Dendritic cell treated with granulocyte-macrophage colony-stimulating factor and Interleukin-4, amounts not matched to agents 40 ng/mL and 50 ng/mL, for 4 days (primary cell): ENCODE measurements at regions of chr10 and their contacts with region 1.

Region 1: DNA sequence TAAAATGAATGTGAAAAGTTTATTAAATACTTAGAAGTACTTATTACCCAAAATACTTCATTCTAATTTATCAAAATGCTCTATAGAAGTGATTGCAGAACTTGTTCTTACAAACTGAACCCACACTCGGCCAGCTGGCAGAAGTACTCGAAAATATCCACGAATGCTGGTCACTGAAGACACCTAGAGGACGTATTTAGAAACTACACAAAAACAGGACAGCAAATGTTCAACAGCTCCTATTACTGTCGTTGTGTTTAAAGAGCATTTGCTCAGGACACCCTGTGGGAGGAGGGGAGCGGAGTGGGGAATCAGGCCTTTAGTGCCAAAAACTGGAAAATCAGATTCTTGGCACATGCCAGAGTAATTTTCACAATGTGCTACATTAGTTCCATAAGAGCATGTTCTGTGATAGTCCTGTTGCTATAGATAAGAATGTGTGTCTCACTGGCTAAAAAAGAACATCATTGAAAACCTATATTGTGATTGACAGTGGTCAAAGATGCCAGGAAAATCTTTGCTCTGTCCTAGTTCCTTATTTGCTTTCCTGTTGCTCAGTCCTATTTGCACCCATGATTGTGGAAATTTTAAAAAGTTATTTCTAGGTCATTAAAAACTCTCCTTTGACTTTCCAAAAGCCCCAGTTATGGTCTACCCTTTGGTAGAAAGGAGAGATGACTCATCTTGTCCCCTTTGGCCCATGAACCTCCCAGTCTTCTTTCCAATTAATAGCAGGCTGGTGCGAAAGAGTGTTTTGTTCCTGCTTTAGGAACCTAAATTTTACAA is 49.0 kb upstream of the NRBF2 start:
- H3K4me3 Mint-ChIP-seq: no peak overlapping the region
- H3K27ac Mint-ChIP-seq: no peak overlapping the region
- H3K4me1 Mint-ChIP-seq: no peaks in the 10 kb centered on the region
- H3K27me3 Mint-ChIP-seq: peaks cover 22% of the 10 kb centered on the region

Region 2: DNA sequence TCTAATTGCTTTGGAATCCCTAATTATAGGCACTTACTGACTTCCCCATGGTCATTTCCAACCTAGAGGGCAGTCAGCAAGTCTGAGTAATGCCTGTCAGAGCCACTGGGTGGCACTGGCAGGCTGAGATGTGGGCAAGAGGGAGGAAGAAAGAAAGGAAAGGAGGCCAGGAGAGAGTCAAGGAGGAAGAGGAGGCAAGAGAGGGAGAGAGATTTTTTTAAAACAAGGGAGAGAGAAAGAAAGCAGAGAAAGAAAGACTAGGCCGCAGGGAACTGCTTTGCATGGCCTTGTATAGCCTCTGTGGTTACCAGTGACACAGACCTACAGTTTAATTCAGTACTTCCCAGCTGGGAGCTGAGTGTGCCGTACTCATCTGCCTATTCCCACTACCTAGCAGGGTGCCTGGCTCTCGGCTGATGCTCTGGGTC is 490.0 kb before region 1 on chr10:
- intact Hi-C with region 1: loop called (anchors 1 kb)
- H3K4me3 Mint-ChIP-seq: no peak overlapping the region
- H3K27ac Mint-ChIP-seq: peak overlapping the region; percentile 24
- H3K4me1 Mint-ChIP-seq: peaks cover 22% of the 10 kb centered on the region
- H3K27me3 Mint-ChIP-seq: no peaks in the 10 kb centered on the region

Region 3: GRCh38 chr10:63003816-63004453 is 80.2 kb before region 1 on chr10:
- intact Hi-C with region 1: loop called (anchors 5 kb)
- H3K4me3 Mint-ChIP-seq: no peak overlapping the region
- H3K27ac Mint-ChIP-seq: no peak overlapping the region
- H3K4me1 Mint-ChIP-seq: no peaks in the 10 kb centered on the region
- H3K27me3 Mint-ChIP-seq: peaks cover 19% of the 10 kb centered on the region

Region 4: GRCh38 chr10:63115732-63116383 is 31.8 kb after region 1 on chr10:
- intact Hi-C with region 1: no loop called
- H3K4me3 Mint-ChIP-seq: no peak overlapping the region
- H3K27ac Mint-ChIP-seq: no peak overlapping the region
- H3K4me1 Mint-ChIP-seq: peaks cover 6% of the 10 kb centered on the region
- H3K27me3 Mint-ChIP-seq: no peaks in the 10 kb centered on the region

Region 5: DNA sequence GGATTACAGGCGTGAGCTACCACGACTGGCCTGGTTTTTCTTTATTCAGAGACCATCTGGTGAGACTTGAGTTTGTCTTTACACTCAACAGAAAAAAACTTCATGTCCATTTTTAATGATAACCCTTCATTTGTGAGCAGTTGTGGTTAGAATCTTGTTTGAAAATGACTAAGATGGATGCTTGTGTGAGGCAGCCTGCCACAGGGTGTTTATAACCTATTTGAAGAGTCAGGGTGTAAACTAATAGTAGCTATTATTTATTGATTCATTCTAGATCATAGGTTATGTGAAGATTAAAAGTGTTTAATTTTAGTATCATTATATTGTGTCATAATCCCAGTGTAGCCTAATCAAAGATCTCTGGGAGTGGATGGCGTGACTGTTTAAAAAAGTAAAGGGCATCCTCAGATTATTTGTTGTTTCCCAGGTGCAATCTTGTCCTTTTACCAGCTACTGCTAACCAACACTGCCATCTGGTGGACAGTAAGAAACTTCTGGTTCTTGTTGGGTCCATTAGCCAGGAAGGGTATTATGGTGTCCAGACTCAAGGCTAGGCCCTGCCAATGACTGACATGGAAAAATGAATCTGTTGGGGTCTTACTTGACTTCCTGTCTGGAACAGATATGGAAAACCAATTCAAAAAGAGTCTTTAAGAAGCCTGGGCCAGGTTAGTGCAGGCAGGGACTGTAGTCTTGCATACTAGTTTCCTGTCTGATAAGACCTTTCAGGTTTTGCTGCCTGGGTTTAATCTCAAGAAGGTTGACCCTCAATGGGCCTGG is 73.9 kb after region 1 on chr10:
- intact Hi-C with region 1: loop called (anchors 10 kb)
- H3K4me3 Mint-ChIP-seq: no peak overlapping the region
- H3K27ac Mint-ChIP-seq: no peak overlapping the region
- H3K4me1 Mint-ChIP-seq: peaks cover 21% of the 10 kb centered on the region
- H3K27me3 Mint-ChIP-seq: no peaks in the 10 kb centered on the region